ENCODE measurements at regions of chr17 and their contacts with region 1.

Region 1: DNA sequence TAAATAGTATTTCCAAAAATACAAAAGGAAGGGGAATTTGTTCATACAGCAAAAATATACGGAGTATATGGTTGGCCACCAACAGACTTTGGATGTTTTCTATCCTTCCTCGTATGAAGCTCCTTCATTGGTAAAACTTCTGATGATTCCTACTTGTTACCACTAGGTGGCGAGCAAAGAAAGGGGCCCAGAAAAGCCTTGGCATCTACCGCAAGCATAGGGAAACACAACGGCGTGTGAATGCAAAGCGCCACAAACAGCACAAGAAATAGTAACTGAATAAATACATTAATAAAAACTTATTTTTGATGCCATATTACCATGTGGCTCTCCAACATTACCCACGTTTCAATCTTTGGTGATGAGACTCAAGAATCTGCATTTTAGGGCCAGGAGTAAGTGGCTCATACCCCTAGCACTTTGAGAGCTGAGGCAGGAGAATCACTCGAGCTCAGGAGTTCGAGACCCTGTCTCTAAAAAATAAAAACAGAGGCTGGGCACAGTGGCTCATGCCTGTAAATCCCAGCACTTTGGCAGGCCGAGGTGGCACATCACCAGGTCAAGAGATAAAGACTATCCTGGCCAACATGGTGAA is 34.5 kb downstream of the YWHAE start:
- DNase-seq: no peak
- ATAC-seq: peak; percentile 45
- H3K4me3 Mint-ChIP-seq: peak overlapping the region; percentile 24
- H3K27ac Mint-ChIP-seq: peak overlapping the region; percentile 56
- H3K4me1 Mint-ChIP-seq: peaks cover 71% of the 10 kb centered on the region
- H3K27me3 Mint-ChIP-seq: no peaks in the 10 kb centered on the region
- CTCF ChIP-seq: no peak

Region 2: DNA sequence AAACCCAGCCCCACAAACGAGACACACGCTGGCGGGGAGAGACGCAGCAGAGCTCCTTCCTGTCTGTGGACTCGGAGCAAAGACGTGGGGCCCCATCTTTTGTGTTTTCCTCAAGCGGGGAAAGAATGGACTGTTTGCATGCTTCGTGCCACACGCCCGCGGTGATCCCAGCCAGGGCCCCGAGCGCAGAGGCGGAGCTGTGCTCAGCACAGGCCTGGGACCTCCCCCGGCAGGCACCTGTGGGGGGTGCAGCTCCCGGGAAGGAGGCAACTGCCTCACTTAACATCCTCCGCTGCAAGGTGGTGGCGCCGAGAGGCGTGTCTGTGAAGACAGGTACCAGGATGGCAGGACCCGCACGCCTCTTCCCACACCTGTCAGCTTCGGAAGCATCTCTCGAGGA is 66.9 kb before region 1 on chr17:
- CTCF ChIA-PET with region 1: no interaction called
- POLR2A ChIA-PET with region 1: no interaction called
- intact Hi-C with region 1: no loop called
- DNase-seq: no peak
- ATAC-seq: no peak
- H3K4me3 Mint-ChIP-seq: no peak overlapping the region
- H3K27ac Mint-ChIP-seq: no peak overlapping the region
- H3K4me1 Mint-ChIP-seq: peaks cover 13% of the 10 kb centered on the region
- H3K27me3 Mint-ChIP-seq: peaks cover 11% of the 10 kb centered on the region
- CTCF ChIP-seq: no peak

Region 3: GRCh38 chr17:1379930-1380313 is 14.4 kb after region 1 on chr17:
- CTCF ChIA-PET with region 1: interaction called, 31 read pairs
- POLR2A ChIA-PET with region 1: interaction called, 4 read pairs
- intact Hi-C with region 1: loop called (anchors 2 kb)
- DNase-seq: no peak
- ATAC-seq: peak; percentile 61
- H3K4me3 Mint-ChIP-seq: peak overlapping the region; percentile 42
- H3K27ac Mint-ChIP-seq: peak overlapping the region; percentile 71
- H3K4me1 Mint-ChIP-seq: peaks cover 76% of the 10 kb centered on the region
- H3K27me3 Mint-ChIP-seq: no peaks in the 10 kb centered on the region
- CTCF ChIP-seq: no peak

Region 4: DNA sequence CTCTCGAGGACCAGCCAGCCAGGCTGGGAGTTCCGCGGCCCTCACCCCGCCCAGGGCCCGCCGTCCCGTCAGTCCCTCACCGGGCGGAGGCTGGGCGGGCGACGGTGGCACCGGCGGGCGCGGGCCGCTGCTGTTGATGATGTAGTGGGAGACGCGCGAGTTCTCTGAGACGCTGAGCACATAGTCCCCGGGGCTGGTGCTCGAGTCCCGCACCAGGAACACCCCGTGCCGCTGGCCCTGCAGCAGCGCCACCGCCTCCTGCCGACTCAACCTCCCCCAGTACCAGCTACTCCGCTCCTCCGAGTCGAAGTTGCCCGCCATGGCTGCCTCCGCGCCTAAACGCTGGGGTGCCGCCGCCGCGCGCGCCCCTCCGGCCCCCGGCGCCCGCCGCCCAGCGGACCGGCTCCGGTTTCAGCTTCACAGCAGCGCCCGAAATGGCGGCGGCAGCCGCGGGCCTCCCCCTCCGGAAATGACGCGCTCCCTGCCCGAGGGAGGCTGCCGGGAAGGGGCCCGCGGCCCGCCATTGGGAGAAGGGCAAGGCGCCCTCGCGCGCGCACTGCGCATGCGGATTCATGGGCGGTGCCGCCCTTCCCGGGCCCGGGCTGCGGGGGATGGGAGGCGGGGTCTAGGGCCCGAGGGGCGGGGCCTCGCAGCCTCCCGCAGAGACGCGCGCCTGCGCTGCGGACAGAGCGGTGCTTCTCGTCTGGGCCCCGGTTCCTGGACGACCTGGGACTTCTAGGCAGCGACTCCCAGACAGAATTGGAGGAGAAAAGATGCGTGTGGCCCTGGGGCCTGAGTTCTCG is 90.5 kb after region 1 on chr17 and contains the start of gene CRK:
- CTCF ChIA-PET with region 1: interaction called, 4 read pairs
- POLR2A ChIA-PET with region 1: interaction called, 5 read pairs
- intact Hi-C with region 1: loop called (anchors 1 kb)
- DNase-seq: peak; percentile 99
- ATAC-seq: peak; percentile 92
- H3K4me3 Mint-ChIP-seq: peak within 1 kb of the TSS; percentile 94
- H3K27ac Mint-ChIP-seq: peak within 1 kb of the TSS; percentile 87
- H3K4me1 Mint-ChIP-seq: peaks cover 53% of the 10 kb centered on the region
- H3K27me3 Mint-ChIP-seq: no peaks in the 10 kb centered on the region
- CTCF ChIP-seq: no peak
- total RNA-seq, gene CRK: 22.5 and 29.1 TPM in 2 replicates

Region 5: GRCh38 chr17:1488030-1488863 is 122.7 kb after region 1 on chr17:
- CTCF ChIA-PET with region 1: interaction called, 8 read pairs
- POLR2A ChIA-PET with region 1: interaction called, 11 read pairs
- intact Hi-C with region 1: loop called (anchors 1 kb)
- DNase-seq: peak; percentile 85
- ATAC-seq: peak; percentile 19
- H3K4me3 Mint-ChIP-seq: peak overlapping the region; percentile 84
- H3K27ac Mint-ChIP-seq: peak overlapping the region; percentile 83
- H3K4me1 Mint-ChIP-seq: peaks cover 58% of the 10 kb centered on the region
- H3K27me3 Mint-ChIP-seq: no peaks in the 10 kb centered on the region
- CTCF ChIP-seq: no peak

Region 6: GRCh38 chr17:1532836-1533602 is 167.5 kb after region 1 on chr17:
- CTCF ChIA-PET with region 1: interaction called, 27 read pairs
- POLR2A ChIA-PET with region 1: no interaction called
- intact Hi-C with region 1: loop called (anchors 1 kb)
- DNase-seq: peak; percentile 45
- ATAC-seq: peak; percentile 97
- H3K4me3 Mint-ChIP-seq: no peak overlapping the region
- H3K27ac Mint-ChIP-seq: no peak overlapping the region
- H3K4me1 Mint-ChIP-seq: peaks cover 13% of the 10 kb centered on the region
- H3K27me3 Mint-ChIP-seq: no peaks in the 10 kb centered on the region
- CTCF ChIP-seq: no peak